AG04449 (cell line): ENCODE measurements at regions of chr15 and their contacts with region 1.

Region 1: DNA sequence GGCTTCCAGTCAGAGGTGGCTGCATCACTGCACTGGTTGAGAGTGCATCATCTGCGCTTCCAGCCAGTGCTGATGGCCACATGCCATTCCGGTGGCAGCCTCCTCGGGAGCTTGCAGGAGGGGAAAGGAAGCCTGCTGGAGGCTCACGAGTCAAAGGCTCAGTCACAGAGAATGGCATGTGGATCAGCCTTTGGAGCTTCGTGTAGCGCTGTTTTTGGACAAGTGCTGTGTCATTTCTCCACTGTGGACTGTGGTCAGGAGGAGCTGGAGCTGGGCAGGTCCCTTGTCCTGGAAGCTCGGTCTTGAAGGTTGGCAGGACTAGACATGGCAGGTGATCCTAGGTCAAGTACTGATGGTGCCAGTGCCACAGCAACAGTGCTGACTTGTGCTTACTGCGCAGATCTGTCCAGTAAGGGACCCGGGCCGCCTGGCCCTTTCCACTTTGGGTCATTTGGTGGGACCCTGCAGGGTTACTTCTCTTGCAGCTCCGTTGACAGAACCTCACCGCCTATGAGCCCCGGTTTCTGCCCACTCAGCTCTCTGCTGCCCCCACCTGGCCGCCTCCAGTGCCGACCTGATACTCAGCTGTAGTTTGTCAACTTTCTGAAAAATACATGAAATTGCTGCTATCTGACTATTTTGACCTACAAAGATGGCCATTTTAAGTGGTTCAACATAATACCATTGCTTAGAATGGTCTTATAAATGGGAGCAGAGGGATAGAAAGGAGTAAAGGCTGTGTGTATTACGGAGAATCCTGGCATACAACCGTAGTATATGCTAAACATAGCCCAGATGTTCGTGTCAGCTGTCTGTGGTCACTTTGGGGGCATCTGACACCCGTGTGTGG is 27.6 kb upstream of the TRPM1 start:
- DNase-seq: no peak
- H3K4me3 ChIP-seq: no peak overlapping the region
- CTCF ChIP-seq: peak; percentile 95

Region 2: DNA sequence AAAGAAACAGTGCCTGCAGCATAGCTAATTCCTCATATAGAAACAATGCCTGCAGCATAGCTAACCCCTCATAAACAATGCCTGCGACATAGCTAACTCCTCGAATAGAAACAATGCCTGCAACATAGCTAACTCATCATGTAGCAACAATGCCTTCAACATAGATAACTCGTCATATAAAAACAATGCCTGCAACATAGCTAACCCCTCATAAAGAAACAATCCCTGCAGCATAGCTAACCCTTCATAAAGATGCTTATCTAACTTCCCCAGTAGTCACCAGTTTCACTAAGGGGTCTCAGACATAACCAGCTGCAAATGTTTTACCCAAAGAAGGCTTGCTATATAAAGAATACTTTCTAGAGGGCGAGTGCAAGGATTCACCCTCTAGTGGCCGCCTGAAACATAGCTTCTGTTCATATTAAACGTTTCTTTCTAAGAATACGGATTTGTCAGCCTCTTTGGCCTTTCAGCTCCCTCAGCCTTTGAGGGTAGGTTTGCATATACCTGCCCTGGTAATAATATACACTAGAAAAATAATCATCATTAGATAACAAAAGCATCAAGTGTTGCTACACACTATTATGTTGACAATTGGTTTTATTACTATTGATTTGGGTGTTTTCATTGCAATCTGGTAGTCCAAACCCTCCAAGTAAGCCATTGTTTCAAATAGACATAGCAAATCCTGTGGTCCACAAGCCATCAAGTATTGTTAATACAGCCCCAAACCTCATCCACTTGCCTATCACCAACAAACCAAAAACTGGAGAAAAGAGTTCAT is 269.9 kb before region 1 on chr15:
- CTCF ChIA-PET with region 1: interaction called, 15 read pairs
- POLR2A ChIA-PET with region 1: no interaction called
- DNase-seq: peak; percentile 17
- H3K4me3 ChIP-seq: no peak overlapping the region
- CTCF ChIP-seq: peak; percentile 61

Region 3: DNA sequence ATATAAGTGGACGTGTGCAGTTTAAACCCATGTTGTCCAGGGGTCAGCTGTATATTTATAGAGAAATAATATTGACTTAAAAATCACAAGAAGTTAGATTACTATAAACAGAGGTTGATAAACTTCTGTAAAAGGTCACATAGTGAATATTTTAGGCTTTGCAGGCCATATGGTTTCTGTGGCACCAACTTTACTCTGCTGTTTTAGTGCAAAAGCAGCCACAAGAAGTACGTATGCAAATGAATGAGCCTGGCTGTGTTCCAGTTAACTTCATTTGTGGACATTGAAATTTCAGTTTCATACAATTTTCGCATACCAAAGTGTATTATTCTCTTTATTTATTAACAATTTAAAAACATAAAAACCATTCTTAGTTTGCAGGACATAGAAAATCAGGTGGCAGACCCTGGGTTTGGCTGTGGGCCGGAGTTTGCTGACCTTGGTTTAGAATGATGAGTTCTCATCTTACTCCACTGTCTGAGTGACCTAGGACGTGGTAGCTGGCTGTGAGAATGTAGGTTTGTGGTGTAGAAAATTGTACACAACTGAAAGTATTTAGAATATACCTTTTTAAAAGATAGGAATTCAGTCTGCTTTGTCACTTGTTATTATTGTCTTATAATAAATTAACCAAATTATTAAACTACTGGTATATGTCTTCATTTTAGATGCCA is 209.1 kb before region 1 on chr15:
- CTCF ChIA-PET with region 1: interaction called, 19 read pairs
- POLR2A ChIA-PET with region 1: no interaction called
- DNase-seq: no peak
- H3K4me3 ChIP-seq: no peak overlapping the region
- CTCF ChIP-seq: no peak

Region 4: DNA sequence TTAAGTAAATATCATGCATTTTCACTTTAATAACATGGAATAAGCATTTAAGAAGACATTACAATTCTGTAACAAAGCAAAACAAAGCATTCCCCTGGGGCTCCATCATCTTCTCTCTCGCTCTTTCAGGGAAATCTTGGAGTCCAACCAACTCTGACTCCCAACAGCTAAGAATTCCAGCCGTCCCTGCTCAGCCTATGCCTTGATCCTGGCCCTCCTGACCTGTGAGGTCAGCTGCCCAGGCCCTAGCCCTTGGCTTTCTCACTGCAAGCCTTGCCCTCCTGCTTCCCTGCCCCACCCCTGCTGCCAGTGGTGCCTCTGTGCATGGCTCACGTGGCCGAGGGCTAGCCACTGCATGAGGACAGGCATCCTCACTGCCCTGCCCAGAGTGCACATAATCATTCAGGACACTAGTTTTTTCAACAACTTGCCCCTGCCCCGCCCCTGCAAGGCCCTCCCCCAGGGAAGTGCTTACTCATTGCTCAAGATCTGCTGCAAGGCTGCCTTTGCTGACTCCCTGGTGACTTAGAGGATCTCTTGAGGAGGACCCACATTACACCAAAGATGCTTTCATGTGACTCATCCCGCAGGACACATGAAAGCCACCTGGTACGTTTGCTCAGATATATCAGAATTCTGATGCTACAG is 175.3 kb before region 1 on chr15:
- CTCF ChIA-PET with region 1: interaction called, 15 read pairs
- POLR2A ChIA-PET with region 1: no interaction called
- DNase-seq: peak; percentile 69
- H3K4me3 ChIP-seq: no peak overlapping the region
- CTCF ChIP-seq: no peak

Region 5: DNA sequence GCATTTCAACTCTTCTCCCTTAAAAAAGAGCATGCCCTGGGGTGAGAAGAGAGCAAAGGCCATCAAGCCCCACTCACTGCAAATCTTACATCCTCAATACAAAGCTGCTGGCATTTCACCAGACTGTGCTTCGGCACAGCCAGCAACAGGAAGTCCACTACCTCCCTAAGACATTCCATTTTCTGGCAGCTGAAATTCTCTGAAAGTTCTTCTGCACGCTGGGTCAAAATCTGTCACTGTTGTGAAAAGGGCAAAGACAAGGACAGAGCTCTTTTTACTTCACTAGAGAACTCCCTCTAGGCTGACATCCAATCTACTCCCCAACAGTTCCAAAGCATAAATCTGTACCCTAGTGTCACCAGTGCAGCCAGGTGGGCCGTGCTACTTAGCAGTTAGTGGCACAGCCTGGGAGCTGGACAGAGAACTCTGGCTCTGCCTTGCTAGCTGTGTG is 144.0 kb before region 1 on chr15:
- CTCF ChIA-PET with region 1: interaction called, 36 read pairs
- POLR2A ChIA-PET with region 1: no interaction called
- DNase-seq: no peak
- H3K4me3 ChIP-seq: no peak overlapping the region
- CTCF ChIP-seq: no peak

Region 6: DNA sequence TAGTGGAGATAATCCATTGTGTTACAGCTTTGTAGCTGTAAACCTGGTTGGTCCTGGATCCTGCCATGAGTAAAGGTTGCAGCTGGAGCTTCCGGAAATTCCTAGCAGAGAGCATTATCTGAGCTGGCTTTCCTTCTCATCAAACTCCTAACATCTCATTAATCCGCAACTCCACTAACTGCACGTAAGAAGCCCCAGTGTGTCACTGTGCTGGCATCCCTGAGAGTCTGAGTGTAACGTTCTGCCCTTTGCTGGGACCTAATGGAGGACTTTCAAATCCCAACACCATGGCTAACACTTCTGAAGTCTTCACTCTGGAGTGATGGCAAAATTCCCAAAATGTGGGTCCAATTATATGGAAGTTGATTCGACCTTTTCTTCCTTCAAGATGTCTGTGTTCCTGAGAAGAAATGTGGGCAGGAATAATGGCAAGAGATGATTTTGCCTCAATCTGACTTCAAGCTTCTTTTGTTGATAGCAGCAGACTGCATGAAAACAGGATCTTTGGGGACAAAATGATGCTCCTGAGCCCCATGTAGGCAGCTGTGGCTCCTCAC is 18.0 kb before region 1 on chr15:
- CTCF ChIA-PET with region 1: interaction called, 21 read pairs
- POLR2A ChIA-PET with region 1: no interaction called
- DNase-seq: no peak
- H3K4me3 ChIP-seq: no peak overlapping the region
- CTCF ChIP-seq: no peak